Right ventricle myocardium inferior (tissue), 1 donor: ENCODE measurements at regions of chr16 and their contacts with region 1.

Region 1: DNA sequence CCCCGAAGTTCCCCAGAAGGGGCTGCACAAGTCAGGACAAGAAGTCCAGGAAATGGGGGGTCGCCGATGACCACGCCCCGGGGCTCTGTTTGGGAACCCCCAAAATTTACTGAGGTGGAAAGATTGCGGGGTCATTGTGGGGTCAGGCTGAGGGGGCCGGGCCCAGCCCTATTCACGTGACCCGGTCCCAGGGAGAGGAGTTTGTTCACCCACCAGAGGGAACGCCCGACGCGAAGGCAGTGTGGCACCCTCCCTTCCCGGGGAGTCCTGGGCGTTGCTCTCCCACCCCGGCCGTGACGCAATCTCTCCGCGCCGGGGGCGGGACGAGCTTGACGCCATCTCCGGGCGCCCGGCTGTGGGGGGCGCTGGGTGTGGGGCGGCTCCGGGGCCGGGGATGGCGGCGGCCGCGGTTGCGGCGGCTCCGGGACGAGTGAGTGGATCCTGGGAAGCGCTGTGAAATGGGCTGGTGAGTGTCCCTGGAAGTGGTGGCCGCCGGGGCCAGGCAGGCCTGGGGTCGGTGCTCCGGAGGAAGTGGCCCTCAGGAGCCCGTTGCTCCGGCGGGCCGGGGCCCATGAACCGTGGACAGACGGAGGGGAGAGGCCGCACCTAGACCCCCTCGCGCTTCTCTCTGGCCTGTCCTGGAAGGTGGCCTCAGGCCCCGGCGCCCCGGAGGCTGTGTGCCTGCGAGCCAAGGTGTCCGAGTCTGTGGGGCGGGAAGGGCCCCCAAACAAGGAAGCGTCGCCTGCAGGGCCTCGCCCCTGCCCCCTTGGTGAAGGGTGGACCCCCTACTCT is at the start of gene ATXN1L:
- DNase-seq: peak; percentile 96
- ATAC-seq: peak; percentile 98
- total RNA-seq, gene ATXN1L: 13.4 TPM

Region 2: DNA sequence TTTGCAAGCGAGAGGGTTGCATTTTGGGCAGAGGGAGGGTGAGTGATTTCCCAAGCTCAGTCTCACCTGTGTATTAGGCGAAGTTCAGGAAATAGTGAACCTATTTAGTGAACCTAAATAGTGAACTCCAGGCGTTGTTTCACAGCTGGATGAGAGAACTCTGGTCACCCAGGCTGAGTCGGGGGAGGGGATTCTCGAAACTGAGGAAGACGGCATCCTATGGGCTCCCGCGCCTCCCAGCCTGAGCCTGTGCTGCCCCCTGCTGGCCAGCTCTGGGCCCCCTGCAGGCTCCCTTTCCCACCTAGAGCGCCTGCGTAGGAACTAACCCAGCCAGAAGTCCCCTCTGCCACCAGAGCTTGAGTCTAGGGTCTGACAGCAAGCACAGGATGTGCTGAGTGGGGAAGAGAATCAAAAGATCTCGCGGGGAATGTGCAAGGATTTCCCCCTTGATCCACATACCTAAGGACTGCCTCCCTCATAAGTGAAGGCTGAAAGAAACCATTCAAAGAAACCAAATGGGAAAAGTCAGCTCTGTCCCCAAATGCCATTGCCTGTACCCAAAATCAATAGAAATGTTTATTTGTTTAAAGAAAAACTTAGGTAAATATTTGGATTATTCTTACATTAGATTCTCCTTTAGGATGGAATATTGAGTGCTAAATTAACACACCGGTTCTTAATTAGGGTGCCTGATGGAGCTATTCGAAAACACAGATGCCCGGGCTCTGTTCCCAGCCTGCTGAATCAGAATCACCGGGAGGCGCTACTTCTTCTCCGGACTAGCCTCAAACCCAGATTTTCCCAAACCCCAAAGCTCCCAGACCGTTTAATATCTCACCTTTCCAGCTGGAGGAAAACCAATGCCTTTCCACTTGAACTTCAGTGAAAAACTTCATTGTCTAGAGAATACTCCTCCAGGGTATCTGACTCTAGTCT is 234.6 kb before region 1 on chr16:
- intact Hi-C with region 1: no loop called
- DNase-seq: no peak
- ATAC-seq: peak; percentile 64

Region 3: DNA sequence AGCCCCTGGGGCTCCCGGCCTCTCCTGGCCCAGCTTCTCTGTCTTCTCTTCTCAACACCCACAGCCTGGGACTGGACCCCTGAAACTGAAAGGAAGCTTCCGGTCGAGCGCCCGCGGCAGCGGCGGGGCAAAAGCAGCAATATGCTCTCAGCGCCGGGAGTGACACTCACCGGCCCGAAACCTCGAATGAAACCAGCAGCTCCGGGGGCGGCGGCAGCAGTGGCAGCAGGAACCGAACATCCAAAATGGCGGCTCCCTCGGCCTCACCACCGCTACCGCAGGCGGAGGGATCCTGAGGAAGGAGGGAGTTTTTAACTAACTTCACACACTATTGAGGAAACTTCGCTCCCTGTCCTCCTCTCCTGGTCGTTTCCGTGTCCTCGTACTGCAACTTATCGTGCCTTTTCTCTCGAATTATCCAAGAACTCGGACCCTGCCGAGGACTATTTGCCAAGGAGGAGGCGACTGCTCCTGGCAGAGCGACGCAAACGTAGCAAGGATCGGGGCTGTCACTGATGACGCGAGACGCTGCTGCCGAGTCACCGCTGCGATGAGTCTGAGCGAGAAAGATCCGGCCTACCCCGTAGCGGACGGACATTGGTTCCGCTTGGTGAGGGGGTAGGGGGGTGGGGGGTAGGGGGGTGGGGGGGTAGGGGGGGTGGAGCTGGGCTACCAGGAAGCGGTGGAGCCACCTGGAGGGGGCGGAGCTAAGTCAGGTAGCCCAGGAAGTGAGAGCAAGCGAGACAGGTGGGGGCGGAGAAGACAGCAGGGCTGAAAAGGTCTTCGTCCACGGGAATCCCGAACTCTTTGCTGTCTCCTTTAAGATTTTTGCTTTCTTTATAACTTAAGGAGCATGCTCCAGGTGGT is 37.0 kb before region 1 on chr16 and contains the start of gene AP1G1:
- intact Hi-C with region 1: loop called (anchors 2 kb)
- DNase-seq: peak; percentile 98
- ATAC-seq: peak; percentile 99
- total RNA-seq, gene AP1G1: 28.1 TPM

Region 4: DNA sequence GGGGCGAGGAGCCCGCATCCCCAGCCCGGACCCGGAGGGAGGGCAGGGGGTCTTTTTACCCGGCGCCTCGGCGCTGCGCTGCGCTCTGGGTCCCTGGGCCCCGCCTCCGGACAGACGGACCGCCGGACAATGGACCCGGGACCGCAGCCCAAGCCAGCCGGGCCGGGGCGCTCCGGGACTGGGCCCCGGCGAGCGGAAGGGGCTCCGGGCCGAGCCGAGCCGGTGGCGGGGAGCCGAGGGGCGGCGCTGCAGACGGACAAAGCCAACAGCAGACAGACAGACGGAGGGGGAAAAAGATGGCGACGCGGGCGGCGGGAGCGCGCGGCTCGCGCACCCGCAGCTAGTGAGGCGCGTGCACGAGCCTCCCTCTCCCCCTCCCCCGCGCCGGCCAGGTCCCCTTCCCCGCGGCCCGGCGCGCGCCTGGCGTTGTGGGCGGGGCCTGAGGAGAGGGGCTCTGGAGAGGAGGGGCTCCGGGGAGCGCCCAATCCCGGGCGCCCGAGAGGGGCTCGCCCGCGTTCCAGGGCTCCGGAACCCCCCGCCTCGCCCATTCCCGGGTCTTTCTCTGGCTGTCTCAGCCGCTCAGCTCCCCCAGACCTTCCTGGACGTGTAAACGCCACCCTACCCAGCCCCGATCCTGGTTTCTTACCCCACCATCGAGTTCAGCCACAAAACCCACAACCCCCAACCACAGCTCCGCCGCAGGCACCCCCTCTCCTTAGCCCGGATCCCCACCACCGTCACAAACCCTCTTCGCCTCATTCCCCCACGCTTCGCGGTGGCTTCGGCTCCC is 38.2 kb after region 1 on chr16 and contains the start of gene ZNF821:
- intact Hi-C with region 1: loop called (anchors 5 kb)
- DNase-seq: peak; percentile 89
- ATAC-seq: peak; percentile 90
- total RNA-seq, gene ZNF821: 2.5 TPM

Region 5: DNA sequence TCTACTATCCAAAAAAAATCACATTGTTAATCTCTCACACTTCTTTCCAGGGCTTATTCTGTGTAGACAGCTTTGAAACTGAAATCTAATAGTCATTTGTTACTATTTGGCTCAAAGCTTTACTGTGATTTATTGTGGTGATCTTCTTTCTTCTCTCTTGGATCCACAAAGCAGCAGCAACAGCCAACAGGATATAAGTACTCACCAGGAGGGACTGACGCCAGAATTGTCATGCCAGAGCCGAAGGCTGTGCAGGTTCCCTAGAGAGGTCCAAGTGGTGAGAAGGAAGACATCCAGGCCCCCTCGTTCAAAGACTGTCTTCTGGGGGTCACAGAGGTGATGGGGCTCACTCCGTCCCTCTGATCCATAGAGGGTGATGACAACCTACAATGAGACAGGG is 121.1 kb after region 1 on chr16:
- intact Hi-C with region 1: no loop called
- DNase-seq: no peak
- ATAC-seq: no peak